Naive thymus-derived CD4-positive, alpha-beta T cell (primary cell): ENCODE measurements at regions of chr16 and their contacts with region 1.

Region 1: DNA sequence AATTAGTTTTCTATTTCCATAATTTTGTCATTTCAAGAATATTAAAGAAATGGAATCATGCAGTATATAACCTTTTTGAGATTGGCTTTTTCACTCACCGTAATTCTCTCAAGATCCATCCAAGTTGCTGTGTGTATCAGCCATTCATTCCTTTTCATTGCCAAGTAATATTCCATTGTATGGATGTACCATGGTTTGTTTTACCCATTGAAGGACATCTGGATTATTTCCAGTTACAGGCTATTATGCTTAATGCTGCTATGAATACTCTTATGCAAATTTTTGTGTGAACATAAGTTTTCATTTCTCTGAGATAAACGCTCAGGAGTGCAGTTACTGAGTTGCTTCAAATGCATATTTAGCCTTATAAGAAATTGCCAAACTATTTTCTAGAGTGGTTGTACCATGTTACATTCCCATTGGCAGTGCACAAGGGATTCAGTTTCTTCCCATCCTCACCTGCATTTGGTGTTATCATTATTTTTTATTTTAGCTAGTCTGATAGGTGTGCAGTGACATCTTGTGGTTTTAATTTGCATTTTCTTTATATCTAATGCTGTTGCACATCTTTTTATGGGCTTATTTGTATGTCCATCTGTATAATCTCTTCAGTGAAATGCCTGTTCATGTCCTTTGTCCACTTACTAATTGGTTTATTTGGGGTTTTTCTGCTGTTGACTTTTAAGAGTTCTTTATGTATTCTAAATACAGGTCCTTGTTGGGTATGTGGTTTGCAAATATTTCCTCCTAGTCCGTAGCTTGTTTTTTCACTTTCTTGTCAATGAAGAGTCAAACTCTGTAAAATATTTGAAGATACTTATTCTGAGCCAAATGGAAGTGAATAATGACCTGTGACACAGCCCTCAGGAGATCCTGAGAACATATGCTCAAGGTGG is 32.7 kb downstream of the BMERB1 start:
- DNase-seq: no peak
- ATAC-seq: no peak
- H3K4me3 ChIP-seq: no peak overlapping the region
- H3K4me3 Mint-ChIP-seq: no peak overlapping the region
- H3K27ac ChIP-seq: no peak overlapping the region
- H3K27ac Mint-ChIP-seq: peak overlapping the region in 1 of 9 donors; percentile 25
- H3K4me1 ChIP-seq: no peaks in the 10 kb centered on the region
- H3K4me1 Mint-ChIP-seq: no peaks in the 10 kb centered on the region
- H3K27me3 ChIP-seq: no peaks in the 10 kb centered on the region
- H3K27me3 Mint-ChIP-seq: no peaks in the 10 kb centered on the region

Region 2: GRCh38 chr16:15427648-15428239 is 39.4 kb before region 1 on chr16:
- CTCF ChIA-PET with region 1: interaction called, 5 read pairs
- POLR2A ChIA-PET with region 1: no interaction called
- intact Hi-C with region 1: loop called in 1 of 2 experiments (anchors 1 kb)
- DNase-seq: peak in 7 of 9 donors; percentile 12 to 42 (median 31)
- ATAC-seq: peak; percentile 61
- H3K4me3 ChIP-seq: no peak overlapping the region
- H3K4me3 Mint-ChIP-seq: no peak overlapping the region
- H3K27ac ChIP-seq: no peak overlapping the region
- H3K27ac Mint-ChIP-seq: no peak overlapping the region
- H3K4me1 ChIP-seq: no peaks in the 10 kb centered on the region
- H3K4me1 Mint-ChIP-seq: peaks cover 0 to 2% (median 0%) of the 10 kb centered on the region in 7 donors
- H3K27me3 ChIP-seq: no peaks in the 10 kb centered on the region
- H3K27me3 Mint-ChIP-seq: peaks cover 0 to 7% (median under 1%) of the 10 kb centered on the region in 5 donors

Region 3: GRCh38 chr16:15477802-15478201 is 10.7 kb after region 1 on chr16:
- CTCF ChIA-PET with region 1: no interaction called
- POLR2A ChIA-PET with region 1: no interaction called
- intact Hi-C with region 1: loop called in 1 of 2 experiments (anchors 1 kb)
- DNase-seq: no peak
- ATAC-seq: no peak
- H3K4me3 ChIP-seq: no peak overlapping the region
- H3K4me3 Mint-ChIP-seq: no peak overlapping the region
- H3K27ac ChIP-seq: no peak overlapping the region
- H3K27ac Mint-ChIP-seq: no peak overlapping the region
- H3K4me1 ChIP-seq: no peaks in the 10 kb centered on the region
- H3K4me1 Mint-ChIP-seq: peaks cover 0 to 14% (median 0%) of the 10 kb centered on the region in 7 donors
- H3K27me3 ChIP-seq: no peaks in the 10 kb centered on the region
- H3K27me3 Mint-ChIP-seq: peaks cover 0 to 4% (median 0%) of the 10 kb centered on the region in 5 donors